Activated CD4-positive, alpha-beta T cell treated with anti-CD3 and anti-CD28 coated beads for 36 hours (primary cell): ENCODE measurements at regions of chr9 and their contacts with region 1.

Region 1: DNA sequence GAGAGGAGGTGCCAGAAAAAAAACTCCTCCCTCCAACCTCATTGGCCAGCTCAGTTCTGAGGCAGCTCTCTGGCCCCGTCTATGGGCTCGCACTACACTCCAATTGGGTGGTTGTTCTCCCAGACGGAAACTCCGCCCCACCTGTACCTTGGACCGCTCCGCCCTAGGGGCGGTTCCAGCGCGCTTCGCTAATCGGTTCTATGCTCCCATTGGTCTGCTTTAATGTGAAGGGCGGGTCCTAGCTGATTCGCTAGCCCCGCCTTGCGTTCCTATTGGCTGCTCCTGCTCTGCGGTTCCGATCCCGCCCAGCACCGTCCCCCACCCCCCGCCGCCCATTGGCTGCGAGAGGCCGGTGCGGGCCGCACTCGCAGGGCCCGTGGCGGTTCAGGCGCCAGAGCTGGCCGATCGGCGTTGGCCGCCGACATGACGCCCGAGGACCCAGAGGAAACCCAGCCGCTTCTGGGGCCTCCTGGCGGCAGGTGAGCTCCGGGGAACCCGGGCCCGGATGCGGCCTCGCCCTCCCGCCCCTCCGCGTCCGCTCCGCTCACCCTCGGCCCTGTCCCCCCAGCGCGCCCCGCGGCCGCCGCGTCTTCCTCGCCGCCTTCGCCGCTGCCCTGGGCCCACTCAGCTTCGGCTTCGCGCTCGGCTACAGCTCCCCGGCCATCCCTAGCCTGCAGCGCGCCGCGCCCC is at the start of gene SLC2A8:
- DNase-seq: peak; percentile 93
- ATAC-seq: peak; percentile 96
- H3K4me3 Mint-ChIP-seq: peak within 1 kb of the TSS; percentile 58
- H3K27ac Mint-ChIP-seq: no peak within 1 kb of the TSS
- H3K4me1 Mint-ChIP-seq: peaks cover 12% of the 10 kb centered on the region
- H3K27me3 Mint-ChIP-seq: peaks cover 62% of the 10 kb centered on the region
- total RNA-seq, gene SLC2A8: 1.3 to 1.7 TPM

Region 2: GRCh38 chr9:126550891-126551351 is 846.0 kb before region 1 on chr9:
- CTCF ChIA-PET with region 1: no interaction called
- POLR2A ChIA-PET with region 1: no interaction called
- intact Hi-C with region 1: no loop called
- DNase-seq: no peak
- ATAC-seq: no peak
- H3K4me3 Mint-ChIP-seq: no peak overlapping the region
- H3K27ac Mint-ChIP-seq: no peak overlapping the region
- H3K4me1 Mint-ChIP-seq: no peaks in the 10 kb centered on the region
- H3K27me3 Mint-ChIP-seq: no peaks in the 10 kb centered on the region

Region 3: GRCh38 chr9:126722252-126723078 is 674.5 kb before region 1 on chr9:
- CTCF ChIA-PET with region 1: no interaction called
- POLR2A ChIA-PET with region 1: no interaction called
- intact Hi-C with region 1: loop called in 1 of 2 experiments (anchors 2 kb)
- DNase-seq: peak; percentile 96
- ATAC-seq: peak; percentile 73
- H3K4me3 Mint-ChIP-seq: peak overlapping the region; percentile 77
- H3K27ac Mint-ChIP-seq: peak overlapping the region; percentile 89
- H3K4me1 Mint-ChIP-seq: peaks cover 43% of the 10 kb centered on the region
- H3K27me3 Mint-ChIP-seq: no peaks in the 10 kb centered on the region

Region 4: DNA sequence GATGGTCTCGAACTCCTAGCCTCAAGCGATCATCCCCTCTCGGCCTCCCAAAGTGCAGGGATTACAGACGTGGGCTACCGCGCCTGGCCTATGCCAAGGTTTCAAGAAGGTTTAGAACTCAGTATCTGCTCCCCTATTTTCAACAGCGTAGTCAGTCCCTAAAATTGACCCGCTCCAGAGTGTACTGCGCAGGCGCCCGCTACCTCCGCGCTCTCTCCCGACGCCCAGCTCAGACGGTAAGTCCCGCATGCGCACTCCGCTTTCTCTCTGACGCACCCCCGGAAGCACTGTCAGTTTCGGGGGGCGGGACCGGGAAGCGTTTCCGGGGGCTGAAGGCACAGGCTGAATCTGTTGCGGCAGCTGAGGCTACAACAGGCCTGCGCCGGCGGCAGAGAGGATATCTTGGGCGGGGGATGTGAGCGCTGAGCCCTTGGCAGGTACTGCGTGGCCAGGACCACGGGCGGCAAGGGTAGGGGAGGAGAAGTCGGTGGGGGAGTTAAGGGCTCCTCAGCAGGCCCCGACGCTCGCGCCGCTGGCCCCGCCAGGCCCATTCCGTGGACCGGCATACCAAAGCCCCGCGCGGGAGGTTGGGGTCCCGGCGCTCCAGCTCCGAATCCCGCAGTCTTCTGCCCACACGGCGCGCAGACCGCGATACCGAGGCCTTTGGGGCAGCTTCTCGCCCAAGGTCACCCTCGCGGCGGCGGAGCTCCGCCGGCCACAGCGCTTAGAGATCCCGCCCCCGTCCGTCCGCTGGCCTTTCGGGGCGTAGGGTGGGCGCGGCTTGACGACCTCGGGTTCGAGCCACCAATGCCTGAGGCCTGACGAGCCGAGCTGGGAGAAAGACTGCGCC is 592.0 kb before region 1 on chr9 and contains the start of gene ZBTB43:
- CTCF ChIA-PET with region 1: no interaction called
- POLR2A ChIA-PET with region 1: no interaction called
- intact Hi-C with region 1: loop called in 1 of 2 experiments (anchors 10 kb)
- DNase-seq: peak; percentile 99
- ATAC-seq: peak; percentile 85
- H3K4me3 Mint-ChIP-seq: peak within 1 kb of the TSS; percentile 96
- H3K27ac Mint-ChIP-seq: peak within 1 kb of the TSS; percentile 100
- H3K4me1 Mint-ChIP-seq: peaks cover 36% of the 10 kb centered on the region
- H3K27me3 Mint-ChIP-seq: no peaks in the 10 kb centered on the region
- total RNA-seq, gene ZBTB43: 19.3 to 23.0 TPM

Region 5: GRCh38 chr9:127214421-127215267 is 182.3 kb before region 1 on chr9:
- CTCF ChIA-PET with region 1: no interaction called
- POLR2A ChIA-PET with region 1: no interaction called
- intact Hi-C with region 1: loop called in 1 of 2 experiments (anchors 1 kb)
- DNase-seq: peak; percentile 80
- ATAC-seq: peak; percentile 83
- H3K4me3 Mint-ChIP-seq: no peak overlapping the region
- H3K27ac Mint-ChIP-seq: no peak overlapping the region
- H3K4me1 Mint-ChIP-seq: peaks cover 4% of the 10 kb centered on the region
- H3K27me3 Mint-ChIP-seq: no peaks in the 10 kb centered on the region

Region 6: GRCh38 chr9:127244609-127245601 is 152.0 kb before region 1 on chr9:
- CTCF ChIA-PET with region 1: interaction called, 3 read pairs
- POLR2A ChIA-PET with region 1: no interaction called
- intact Hi-C with region 1: loop called in 1 of 2 experiments (anchors 1 kb)
- DNase-seq: peak; percentile 98
- ATAC-seq: peak; percentile 100
- H3K4me3 Mint-ChIP-seq: peak overlapping the region; percentile 78
- H3K27ac Mint-ChIP-seq: peak overlapping the region; percentile 59
- H3K4me1 Mint-ChIP-seq: peaks cover 6% of the 10 kb centered on the region
- H3K27me3 Mint-ChIP-seq: peaks cover 5% of the 10 kb centered on the region

Region 7: GRCh38 chr9:127311239-127311741 is 85.7 kb before region 1 on chr9:
- CTCF ChIA-PET with region 1: no interaction called
- POLR2A ChIA-PET with region 1: no interaction called
- intact Hi-C with region 1: loop called in 1 of 2 experiments (anchors 10 kb)
- DNase-seq: peak; percentile 47
- ATAC-seq: peak; percentile 30
- H3K4me3 Mint-ChIP-seq: no peak overlapping the region
- H3K27ac Mint-ChIP-seq: no peak overlapping the region
- H3K4me1 Mint-ChIP-seq: peaks cover 2% of the 10 kb centered on the region
- H3K27me3 Mint-ChIP-seq: peaks cover 22% of the 10 kb centered on the region